ENCODE measurements at regions of chr16 and their contacts with region 1.

Region 1: GRCh38 chr16:8581831-8582580 is 8.3 kb downstream of the TMEM114 start:
- DNase-seq: no peak
- ATAC-seq: peak; percentile 29; the same call in 1 of the 2 replicates
- H3K4me3 Mint-ChIP-seq: no peak overlapping the region
- H3K27ac Mint-ChIP-seq: no peak overlapping the region
- H3K4me1 Mint-ChIP-seq: peaks cover 3% of the 10 kb centered on the region
- H3K27me3 Mint-ChIP-seq: peaks cover 9% of the 10 kb centered on the region
- CTCF ChIP-seq: no peak

Region 2: GRCh38 chr16:8469102-8469778 is 112.8 kb before region 1 on chr16:
- CTCF ChIA-PET with region 1: no interaction called
- POLR2A ChIA-PET with region 1: no interaction called
- DNase-seq: no peak
- ATAC-seq: no peak
- H3K4me3 Mint-ChIP-seq: no peak overlapping the region
- H3K27ac Mint-ChIP-seq: no peak overlapping the region
- H3K4me1 Mint-ChIP-seq: no peaks in the 10 kb centered on the region
- H3K27me3 Mint-ChIP-seq: peaks cover 12% of the 10 kb centered on the region
- CTCF ChIP-seq: no peak

Region 3: GRCh38 chr16:8668113-8668512 is 86.1 kb after region 1 on chr16:
- CTCF ChIA-PET with region 1: no interaction called
- POLR2A ChIA-PET with region 1: interaction called, 14 read pairs
- DNase-seq: no peak
- ATAC-seq: no peak
- H3K4me3 Mint-ChIP-seq: no peak overlapping the region
- H3K27ac Mint-ChIP-seq: no peak overlapping the region
- H3K4me1 Mint-ChIP-seq: peaks cover 17% of the 10 kb centered on the region
- H3K27me3 Mint-ChIP-seq: peaks cover 4% of the 10 kb centered on the region; the same call in 1 of the 2 replicates
- CTCF ChIP-seq: no peak